HCT116 (cell line): ENCODE measurements at regions of chr2 and their contacts with region 1.

Region 1: DNA sequence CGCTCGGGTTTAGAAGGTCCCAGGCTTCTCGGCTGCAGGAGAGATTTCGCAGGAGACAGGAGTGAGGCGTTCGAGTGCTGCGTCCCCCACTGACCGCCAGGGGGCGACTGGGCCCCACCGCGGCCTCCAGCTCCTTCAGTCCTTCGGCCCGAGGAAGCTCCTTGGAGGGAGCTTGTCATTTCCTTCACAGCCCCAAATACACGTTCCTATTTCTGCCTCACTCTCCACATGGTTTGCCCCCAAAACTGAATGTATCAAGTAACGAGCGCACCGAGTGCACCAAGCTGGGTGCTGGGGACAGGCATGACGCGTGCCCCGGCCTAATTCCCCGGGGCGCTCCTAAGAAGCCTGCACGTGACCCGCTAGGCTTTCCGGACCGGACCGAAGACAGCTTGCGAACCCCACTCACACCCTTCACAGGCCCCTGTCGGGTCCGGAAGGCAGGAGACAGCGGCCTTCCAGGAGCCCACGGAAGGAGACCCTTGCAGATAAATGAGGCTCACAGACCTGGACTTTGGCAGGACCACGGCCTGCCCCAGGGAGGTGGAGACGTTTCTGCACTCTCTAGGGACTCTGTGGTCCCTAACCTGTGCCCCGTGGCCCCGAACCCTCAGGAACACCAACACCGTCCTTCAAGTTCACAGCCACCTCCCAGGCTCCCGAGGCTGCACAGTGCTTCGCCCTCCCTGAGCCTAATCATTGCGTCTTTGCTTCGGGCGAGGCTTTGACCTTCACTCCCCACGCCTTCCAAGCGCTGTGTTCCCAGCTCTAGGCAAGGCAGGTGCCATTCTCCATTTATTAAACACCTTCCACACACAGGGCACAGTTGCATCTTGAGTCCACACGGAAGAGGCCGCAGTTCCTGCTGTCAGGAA is 13.0 kb upstream of the FAHD2A start:
- DNase-seq: peak; percentile 18
- ATAC-seq: peak; percentile 94
- H3K4me3 ChIP-seq: no peak overlapping the region
- H3K27ac ChIP-seq: no peak overlapping the region
- H3K4me1 ChIP-seq: peaks cover 0 to 3% of the 10 kb centered on the region in 2 experiments; a peak in 1 of 4 replicates
- H3K27me3 ChIP-seq: no peaks in the 10 kb centered on the region
- CTCF ChIP-seq: peak; percentile 68 to 99 (median 93)
- POLR2A ChIP-seq: no peak
- RAD21 ChIP-seq: peak; percentile 71

Region 2: GRCh38 chr2:95231723-95232122 is 157.8 kb before region 1 on chr2:
- CTCF ChIA-PET with region 1: interaction called, 11 read pairs
- POLR2A ChIA-PET with region 1: no interaction called
- RAD21 ChIA-PET with region 1: no interaction called
- intact Hi-C with region 1: no loop called
- DNase-seq: peak; percentile 66
- ATAC-seq: peak; percentile 55
- H3K4me3 ChIP-seq: no peak overlapping the region
- H3K27ac ChIP-seq: no peak overlapping the region
- H3K4me1 ChIP-seq: no peaks in the 10 kb centered on the region
- H3K27me3 ChIP-seq: no peaks in the 10 kb centered on the region
- CTCF ChIP-seq: peak; percentile 92 to 95 (median 95)
- POLR2A ChIP-seq: no peak
- RAD21 ChIP-seq: peak; percentile 99

Region 3: DNA sequence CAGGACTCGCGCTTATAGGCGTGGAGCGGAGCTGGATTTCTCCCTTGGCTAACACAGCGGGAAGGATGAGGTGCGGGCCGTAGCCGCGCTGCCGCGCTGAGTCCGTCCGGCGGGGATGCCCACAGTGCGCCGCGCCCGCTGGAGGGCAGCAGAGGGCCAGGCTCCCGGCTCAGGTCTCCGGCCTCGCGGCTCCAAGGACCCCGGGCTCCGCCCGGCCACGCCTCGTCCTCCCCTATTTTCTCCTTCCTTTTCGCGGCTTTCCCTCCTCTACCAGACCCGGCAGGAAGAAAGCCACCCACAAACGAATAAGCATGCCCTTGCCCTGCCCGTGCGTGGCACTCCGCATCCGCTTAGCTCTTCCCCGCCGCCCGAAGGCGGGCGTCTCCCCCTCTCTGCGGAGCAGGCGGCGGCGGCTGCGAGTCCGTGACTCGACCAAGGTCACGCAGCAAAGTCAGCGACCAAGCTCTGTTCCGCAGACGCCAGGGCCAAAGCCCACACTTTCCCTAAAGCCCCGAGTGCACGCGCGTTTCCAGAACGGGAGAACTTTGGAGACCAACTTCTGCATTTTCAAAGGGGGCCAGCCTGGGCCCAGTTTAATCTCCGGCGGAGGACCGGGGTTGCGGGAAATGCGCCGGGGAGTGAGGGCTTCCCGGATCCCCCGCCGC is 43.8 kb before region 1 on chr2:
- CTCF ChIA-PET with region 1: interaction called, 19 read pairs
- POLR2A ChIA-PET with region 1: no interaction called
- RAD21 ChIA-PET with region 1: no interaction called
- intact Hi-C with region 1: no loop called
- DNase-seq: peak; percentile 60
- ATAC-seq: peak; percentile 92
- H3K4me3 ChIP-seq: peak overlapping the region; percentile 48 to 62
- H3K27ac ChIP-seq: peak overlapping the region; percentile 49; the same call in 1 of the 2 replicates
- H3K4me1 ChIP-seq: peaks cover 0 to 26% of the 10 kb centered on the region in 2 experiments; a peak in 3 of 4 replicates
- H3K27me3 ChIP-seq: no peaks in the 10 kb centered on the region
- CTCF ChIP-seq: peak; percentile 63 to 95 (median 79); a peak in 5 of 6 replicates
- POLR2A ChIP-seq: no peak
- RAD21 ChIP-seq: peak; percentile 80

Region 4: DNA sequence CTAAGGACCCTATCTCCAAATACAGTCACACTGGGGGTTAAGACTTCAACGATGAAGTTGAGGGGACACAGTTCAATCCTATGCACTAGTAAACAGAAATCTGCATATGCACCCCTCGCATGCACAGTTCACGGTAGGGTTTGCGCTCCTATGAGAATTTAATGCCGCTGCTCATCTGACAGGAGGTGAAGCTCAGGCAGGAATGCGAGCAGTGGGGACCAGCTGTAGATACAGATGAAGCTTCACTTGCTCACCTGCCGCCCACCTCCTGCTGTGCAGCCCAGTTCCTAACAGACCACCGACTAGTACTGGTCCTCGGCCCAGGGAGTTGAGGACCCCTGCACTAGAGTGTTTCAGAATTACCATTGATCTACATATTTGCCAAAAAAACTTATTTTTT is 27.0 kb before region 1 on chr2:
- CTCF ChIA-PET with region 1: interaction called, 10 read pairs
- POLR2A ChIA-PET with region 1: no interaction called
- RAD21 ChIA-PET with region 1: no interaction called
- intact Hi-C with region 1: no loop called
- DNase-seq: no peak
- ATAC-seq: no peak
- H3K4me3 ChIP-seq: no peak overlapping the region
- H3K27ac ChIP-seq: no peak overlapping the region
- H3K4me1 ChIP-seq: no peaks in the 10 kb centered on the region
- H3K27me3 ChIP-seq: no peaks in the 10 kb centered on the region
- CTCF ChIP-seq: no peak
- POLR2A ChIP-seq: no peak
- RAD21 ChIP-seq: no peak

Region 5: DNA sequence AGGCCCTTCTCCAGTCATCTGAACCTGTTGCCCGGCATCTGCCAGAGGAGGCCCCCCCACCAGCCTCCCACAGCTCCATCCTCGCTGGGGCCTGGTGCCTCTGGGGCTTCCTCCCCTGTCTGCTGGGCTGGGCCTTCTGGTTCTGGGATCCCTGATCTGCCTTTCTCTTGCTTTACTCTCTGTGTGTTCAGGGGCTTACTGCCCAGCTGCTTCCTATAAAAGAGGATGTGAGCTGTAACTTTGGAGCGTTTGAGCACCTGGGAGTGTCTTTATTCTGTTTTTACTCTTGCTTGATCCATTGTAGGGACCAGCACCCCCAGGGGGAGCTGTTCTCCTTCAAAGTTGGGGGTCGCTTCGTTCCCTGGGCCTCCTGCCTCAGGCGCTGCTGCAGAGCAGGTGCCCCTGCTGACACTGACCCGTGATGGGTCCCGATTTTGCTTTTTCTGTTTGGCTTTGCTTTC is 10.1 kb before region 1 on chr2:
- CTCF ChIA-PET with region 1: interaction called, 17 read pairs
- POLR2A ChIA-PET with region 1: no interaction called
- RAD21 ChIA-PET with region 1: no interaction called
- intact Hi-C with region 1: no loop called
- DNase-seq: no peak
- ATAC-seq: peak; percentile 37; the same call in 1 of the 2 replicates
- H3K4me3 ChIP-seq: no peak overlapping the region
- H3K27ac ChIP-seq: no peak overlapping the region
- H3K4me1 ChIP-seq: no peaks in the 10 kb centered on the region
- H3K27me3 ChIP-seq: no peaks in the 10 kb centered on the region
- CTCF ChIP-seq: peak in 2 of 3 experiments; percentile 35 to 37; a peak in 4 of 6 replicates
- POLR2A ChIP-seq: no peak
- RAD21 ChIP-seq: no peak

Region 6: GRCh38 chr2:95402370-95403203 is 13.1 kb after region 1 on chr2 and contains the start of gene FAHD2A:
- CTCF ChIA-PET with region 1: interaction called, 29 read pairs
- POLR2A ChIA-PET with region 1: interaction called, 5 read pairs
- RAD21 ChIA-PET with region 1: no interaction called
- intact Hi-C with region 1: no loop called
- DNase-seq: peak; percentile 67
- ATAC-seq: peak; percentile 88
- H3K4me3 ChIP-seq: peak within 1 kb of the TSS; percentile 97 to 100
- H3K27ac ChIP-seq: peak within 1 kb of the TSS; percentile 75
- H3K4me1 ChIP-seq: peaks cover 8 to 12% of the 10 kb centered on the region in 2 experiments
- H3K27me3 ChIP-seq: no peaks in the 10 kb centered on the region
- CTCF ChIP-seq: no peak
- POLR2A ChIP-seq: peak; percentile 40
- RAD21 ChIP-seq: no peak
- total RNA-seq, gene FAHD2A: 25.4 TPM

Region 7: DNA sequence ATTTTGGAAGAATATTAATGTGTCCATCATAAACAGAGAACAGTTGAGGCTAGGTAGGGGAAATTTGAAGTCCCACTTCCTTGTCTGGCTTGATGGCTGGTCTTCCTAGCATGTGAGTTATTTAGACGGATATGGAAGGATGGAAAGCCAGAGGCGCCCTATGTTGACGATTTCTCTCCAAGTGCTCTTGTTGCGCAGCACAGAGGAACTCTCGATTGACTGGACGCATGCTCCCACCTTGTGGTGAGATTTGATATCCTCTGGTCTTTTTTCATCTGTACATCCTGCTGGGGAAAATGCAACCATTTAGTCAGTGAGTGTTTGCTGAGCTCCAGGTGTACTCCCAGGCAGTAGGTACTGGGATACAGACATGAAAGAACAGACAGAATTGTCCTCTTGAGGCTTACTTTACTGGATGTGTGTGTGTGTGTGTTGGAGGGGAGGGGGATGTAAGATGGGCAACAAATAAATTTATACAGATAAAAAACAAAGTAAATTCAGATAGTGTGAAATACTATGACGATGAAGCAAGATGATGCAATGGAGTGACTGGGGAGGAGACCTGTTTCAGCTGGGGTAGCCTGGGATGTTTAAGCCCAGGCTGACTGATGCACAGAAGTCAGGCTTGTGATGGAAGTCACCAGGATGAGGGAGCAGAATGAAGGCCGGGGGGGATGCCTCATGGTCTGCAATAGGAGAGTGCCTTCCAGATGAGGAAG is 339.6 kb after region 1 on chr2:
- CTCF ChIA-PET with region 1: interaction called, 11 read pairs
- POLR2A ChIA-PET with region 1: no interaction called
- RAD21 ChIA-PET with region 1: interaction called in 1 of 2 experiments, 3 read pairs
- intact Hi-C with region 1: loop called (anchors 1 kb)
- DNase-seq: peak; percentile 86
- ATAC-seq: peak; percentile 98
- H3K4me3 ChIP-seq: no peak overlapping the region
- H3K27ac ChIP-seq: no peak overlapping the region
- H3K4me1 ChIP-seq: peaks cover 0 to 4% of the 10 kb centered on the region in 2 experiments; a peak in 1 of 4 replicates
- H3K27me3 ChIP-seq: no peaks in the 10 kb centered on the region
- CTCF ChIP-seq: peak; percentile 47 to 91 (median 62); a peak in 5 of 6 replicates
- POLR2A ChIP-seq: no peak
- RAD21 ChIP-seq: peak; percentile 95